BJ (cell line): ENCODE measurements at regions of chr4 and their contacts with region 1.

Region 1: GRCh38 chr4:158729716-158730559 is 6.7 kb upstream of the PPID start:
- DNase-seq: no peak
- H3K4me3 ChIP-seq: no peak overlapping the region
- H3K27me3 ChIP-seq: peaks cover 3% of the 10 kb centered on the region
- CTCF ChIP-seq: peak; percentile 91

Region 2: DNA sequence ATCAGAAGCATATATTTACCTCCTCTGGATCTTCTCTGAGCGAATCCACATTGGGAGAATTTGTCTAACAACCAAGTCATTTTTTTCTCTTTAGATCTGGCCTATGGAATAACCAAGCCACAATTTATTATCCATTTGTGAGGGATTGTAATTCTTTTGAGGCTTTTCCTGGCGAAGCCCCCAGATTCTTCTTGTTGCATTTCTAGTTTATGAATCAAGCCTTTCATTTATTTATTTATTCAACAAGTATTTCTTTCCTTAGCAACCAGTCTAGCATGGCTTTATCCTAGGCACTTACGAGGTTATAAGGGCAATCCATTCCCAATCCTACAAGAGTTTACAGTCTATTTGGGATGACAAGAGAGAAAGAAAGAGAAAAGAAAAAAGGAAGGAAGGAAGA is 20.4 kb after region 1 on chr4:
- CTCF ChIA-PET with region 1: no interaction called
- POLR2A ChIA-PET with region 1: no interaction called
- DNase-seq: peak; percentile 94
- H3K4me3 ChIP-seq: no peak overlapping the region
- H3K27me3 ChIP-seq: no peaks in the 10 kb centered on the region
- CTCF ChIP-seq: no peak

Region 3: DNA sequence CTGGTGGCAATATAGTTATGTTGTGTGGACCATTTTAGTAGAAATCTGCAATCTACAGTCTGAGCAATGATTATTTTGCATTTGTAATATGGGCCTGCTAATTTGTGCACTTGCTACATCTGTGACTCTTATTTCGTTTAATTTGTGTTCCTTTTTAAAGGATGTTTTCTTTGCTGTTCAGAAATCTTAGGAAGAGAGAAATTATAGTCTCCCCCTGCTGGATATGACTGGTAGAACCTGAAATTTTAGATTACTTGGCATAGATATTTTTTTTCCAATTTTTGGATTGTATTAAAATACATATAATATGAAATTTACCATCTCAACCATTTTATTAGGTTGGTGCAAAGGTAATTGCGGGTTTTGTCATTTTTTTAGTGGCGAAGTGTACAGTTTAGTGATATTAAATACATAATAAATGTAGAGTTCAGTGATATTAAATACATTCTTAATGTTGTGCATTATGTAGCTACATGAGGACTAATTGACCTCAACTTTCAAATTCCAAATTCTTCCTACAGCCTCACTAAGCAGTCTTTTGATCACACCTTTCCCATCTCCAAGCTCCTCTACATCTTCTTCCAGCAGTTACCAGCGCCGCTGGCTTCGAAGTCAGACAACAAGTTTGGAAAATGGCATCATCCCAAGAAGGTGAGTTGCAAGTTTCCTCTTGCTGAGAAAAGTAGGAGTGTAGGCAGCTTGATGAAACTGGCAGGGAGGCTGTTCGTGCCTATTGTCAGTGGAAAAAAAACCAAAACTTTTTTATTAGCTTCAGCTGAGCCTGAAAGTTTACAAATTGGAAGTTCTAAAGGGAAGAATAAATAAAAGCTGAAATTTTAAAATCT is 121.1 kb after region 1 on chr4:
- CTCF ChIA-PET with region 1: interaction called, 29 read pairs
- POLR2A ChIA-PET with region 1: no interaction called
- DNase-seq: no peak
- H3K4me3 ChIP-seq: no peak overlapping the region
- H3K27me3 ChIP-seq: no peaks in the 10 kb centered on the region
- CTCF ChIP-seq: peak; percentile 53

Region 4: GRCh38 chr4:159150821-159151390 is 421.0 kb after region 1 on chr4:
- CTCF ChIA-PET with region 1: no interaction called
- POLR2A ChIA-PET with region 1: interaction called, 10 read pairs
- DNase-seq: no peak
- H3K4me3 ChIP-seq: no peak overlapping the region
- H3K27me3 ChIP-seq: no peaks in the 10 kb centered on the region
- CTCF ChIP-seq: no peak